ENCODE measurements at regions of chr19 and their contacts with region 1.

Region 1: DNA sequence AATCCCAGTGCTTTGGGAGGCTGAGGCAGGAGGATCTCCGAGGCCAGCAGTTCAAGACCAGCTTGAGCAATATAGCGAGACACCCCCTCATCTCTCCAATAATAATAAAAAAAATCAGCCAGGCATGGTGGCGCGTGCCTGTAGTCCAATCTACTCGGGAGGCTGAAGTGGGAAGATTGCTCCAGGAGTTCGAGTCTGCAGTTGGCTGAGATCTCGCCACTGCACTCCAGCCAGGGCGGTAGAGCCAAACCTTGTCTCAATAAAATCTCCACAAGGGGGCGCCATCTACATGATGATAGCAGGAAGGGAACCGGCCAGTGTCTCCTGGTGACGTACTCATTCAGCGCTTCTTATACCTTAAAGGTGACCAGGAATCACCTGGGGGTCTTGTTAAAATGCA is 13.6 kb upstream of the C5AR1 start:
- DNase-seq: peak; percentile 89
- H3K4me3 ChIP-seq: no peak overlapping the region
- H3K27ac ChIP-seq: no peak overlapping the region
- H3K4me1 ChIP-seq: no peaks in the 10 kb centered on the region
- H3K27me3 ChIP-seq: no peaks in the 10 kb centered on the region

Region 2: GRCh38 chr19:47381653-47382279 is 85.7 kb after region 1 on chr19:
- in situ Hi-C with region 1: loop called (anchors 10 kb)
- DNase-seq: no peak
- H3K4me3 ChIP-seq: no peak overlapping the region
- H3K27ac ChIP-seq: no peak overlapping the region
- H3K4me1 ChIP-seq: no peaks in the 10 kb centered on the region; the same call in 1 of the 2 replicates
- H3K27me3 ChIP-seq: no peaks in the 10 kb centered on the region